Left cardiac atrium (tissue), 4 donors: ENCODE measurements at regions of chr14 and their contacts with region 1.

Region 1: GRCh38 chr14:22822571-22823098 is 7.1 kb upstream of the MRPL52 start:
- DNase-seq: peak; percentile 83
- ATAC-seq: peak; percentile 83 to 88

Region 2: GRCh38 chr14:22556990-22557623 is 265.5 kb before region 1 on chr14:
- intact Hi-C with region 1: loop called (anchors 10 kb)
- DNase-seq: peak; percentile 87
- ATAC-seq: peak; percentile 83 to 86

Region 3: GRCh38 chr14:22570132-22570949 is 252.3 kb before region 1 on chr14:
- intact Hi-C with region 1: loop called in 1 of 2 experiments (anchors 5 kb)
- DNase-seq: peak; percentile 69
- ATAC-seq: peak; percentile 69 to 80

Region 4: DNA sequence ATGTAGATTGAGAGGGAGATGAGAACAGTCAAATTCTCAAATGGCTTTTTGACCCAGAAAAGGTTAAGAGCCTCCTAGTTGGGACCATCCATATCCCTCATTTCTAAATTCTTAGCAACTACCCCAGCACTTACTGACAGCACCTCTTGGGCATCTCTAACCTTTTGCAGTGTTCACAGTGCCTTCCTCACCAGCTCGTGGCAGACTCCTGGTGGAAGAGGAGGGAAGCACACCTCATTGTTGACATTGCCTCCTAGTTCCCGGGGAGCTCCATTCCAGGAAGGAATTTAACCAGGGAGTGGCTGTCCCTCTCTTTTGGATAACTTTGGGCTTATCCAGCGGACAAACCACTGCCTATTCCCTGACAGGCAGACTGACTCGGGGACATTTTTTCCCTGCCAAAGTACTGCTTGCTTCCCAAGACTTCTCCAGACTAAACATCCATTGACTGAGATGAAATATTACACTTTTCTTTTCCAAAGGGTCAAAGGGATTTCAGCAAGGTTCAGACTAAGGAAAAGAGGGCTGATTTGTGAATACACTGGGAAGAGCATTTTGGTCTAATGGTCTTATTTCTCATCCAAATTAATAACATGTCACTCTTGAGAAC is 169.5 kb before region 1 on chr14:
- intact Hi-C with region 1: loop called in 1 of 2 experiments (anchors 5 kb)
- DNase-seq: peak; percentile 48
- ATAC-seq: peak; percentile 78 to 92

Region 5: GRCh38 chr14:22852940-22853767 is 30.5 kb after region 1 on chr14:
- intact Hi-C with region 1: loop called (anchors 1 to 5 kb)
- DNase-seq: peak; percentile 89
- ATAC-seq: peak; percentile 50 to 56

Region 6: GRCh38 chr14:22900081-22900799 is 77.6 kb after region 1 on chr14:
- intact Hi-C with region 1: no loop called
- DNase-seq: no peak
- ATAC-seq: peak; percentile 47 to 54